OCI-LY7 (cell line): ENCODE measurements at regions of chr9 and their contacts with region 1.

Region 1: GRCh38 chr9:98118640-98119601 is at the start of gene TRIM14:
- DNase-seq: peak; percentile 59
- H3K4me3 ChIP-seq: peak within 1 kb of the TSS; percentile 66
- H3K27ac ChIP-seq: peak within 1 kb of the TSS; percentile 73
- H3K4me1 ChIP-seq: peaks cover 58% of the 10 kb centered on the region
- CTCF ChIP-seq: peak; percentile 34; the same call in 1 of the 2 replicates
- total RNA-seq, gene TRIM14: 18.4 and 21.4 TPM in 2 replicates

Region 2: GRCh38 chr9:98101868-98102273 is 17.1 kb before region 1 on chr9:
- CTCF ChIA-PET with region 1: interaction called, 5 read pairs
- POLR2A ChIA-PET with region 1: interaction called, 39 read pairs
- intact Hi-C with region 1: loop called (anchors 2 kb)
- DNase-seq: peak; percentile 97
- H3K4me3 ChIP-seq: peak overlapping the region; percentile 59
- H3K27ac ChIP-seq: peak overlapping the region; percentile 95
- H3K4me1 ChIP-seq: peaks cover 98% of the 10 kb centered on the region
- CTCF ChIP-seq: no peak

Region 3: DNA sequence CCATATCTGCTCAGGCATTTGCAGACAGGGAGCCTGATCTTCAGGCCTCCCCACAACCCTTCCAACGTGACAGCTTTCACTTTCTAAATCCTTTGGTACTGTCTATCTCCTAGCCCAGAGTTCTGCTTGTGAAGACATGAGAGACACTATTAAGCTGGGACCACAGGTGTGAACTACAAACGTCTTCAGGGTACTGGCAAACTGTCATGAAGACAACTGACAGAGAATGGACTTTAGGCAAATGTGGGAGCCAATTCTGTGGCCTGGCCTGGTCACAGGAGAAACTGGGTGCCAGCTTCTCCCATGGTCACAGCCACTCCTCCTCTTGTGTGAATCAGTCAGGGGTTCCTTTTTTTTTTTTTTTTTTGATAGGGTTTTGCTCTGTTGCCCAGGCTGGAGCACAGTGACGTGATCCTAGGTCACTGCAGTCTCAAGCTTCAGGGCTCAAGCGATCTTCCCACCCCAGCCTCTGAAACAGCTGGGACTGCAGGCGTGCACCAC is 10.3 kb before region 1 on chr9:
- CTCF ChIA-PET with region 1: interaction called, 9 read pairs
- POLR2A ChIA-PET with region 1: interaction called, 39 read pairs
- intact Hi-C with region 1: loop called (anchors 2 kb)
- DNase-seq: peak; percentile 83
- H3K4me3 ChIP-seq: peak overlapping the region; percentile 1
- H3K27ac ChIP-seq: peak overlapping the region; percentile 92
- H3K4me1 ChIP-seq: peaks cover 64% of the 10 kb centered on the region
- CTCF ChIP-seq: no peak

Region 4: DNA sequence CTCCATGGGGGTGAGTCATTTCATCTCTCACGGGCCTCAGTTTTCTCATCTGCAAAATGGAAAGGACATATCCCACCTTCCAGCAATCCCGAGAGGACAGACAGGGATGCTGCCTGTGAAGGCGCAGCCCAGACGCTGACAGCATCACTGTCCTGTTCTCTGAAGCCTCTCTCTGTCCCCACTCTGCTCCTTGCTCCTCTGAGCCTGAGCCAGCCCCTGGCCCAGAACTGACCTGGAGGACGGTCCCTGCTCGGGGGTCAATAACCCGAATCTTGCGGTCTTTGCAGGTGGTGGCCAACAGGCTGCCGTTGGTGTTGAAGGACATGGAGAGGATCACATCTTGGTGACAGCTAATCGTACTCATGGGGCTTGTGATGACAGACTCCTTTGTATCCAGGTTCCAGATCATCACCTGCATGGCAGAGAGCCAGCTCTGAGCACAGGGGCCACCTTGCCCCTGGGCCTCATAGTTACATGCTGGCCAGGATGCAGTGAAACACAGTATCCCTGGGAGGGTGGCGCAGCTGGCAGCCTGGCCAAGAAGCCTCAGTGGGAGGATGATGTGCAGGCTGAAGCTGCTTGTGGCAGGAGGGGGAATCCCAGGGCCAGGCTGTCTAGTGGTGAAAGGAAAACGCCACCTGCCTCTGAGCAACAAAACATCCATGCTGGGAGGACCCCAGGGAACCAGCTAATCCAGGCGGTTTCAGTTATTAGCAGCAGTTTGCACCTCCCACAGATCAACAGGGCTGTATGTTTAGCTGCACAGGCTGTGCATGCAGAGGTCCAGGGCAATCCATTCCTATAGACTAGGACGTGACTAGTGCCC is 14.1 kb after region 1 on chr9:
- CTCF ChIA-PET with region 1: no interaction called
- POLR2A ChIA-PET with region 1: interaction called, 11 read pairs
- intact Hi-C with region 1: no loop called
- DNase-seq: peak; percentile 38
- H3K4me3 ChIP-seq: no peak overlapping the region
- H3K27ac ChIP-seq: no peak overlapping the region
- H3K4me1 ChIP-seq: peaks cover 23% of the 10 kb centered on the region
- CTCF ChIP-seq: peak; percentile 37

Region 5: DNA sequence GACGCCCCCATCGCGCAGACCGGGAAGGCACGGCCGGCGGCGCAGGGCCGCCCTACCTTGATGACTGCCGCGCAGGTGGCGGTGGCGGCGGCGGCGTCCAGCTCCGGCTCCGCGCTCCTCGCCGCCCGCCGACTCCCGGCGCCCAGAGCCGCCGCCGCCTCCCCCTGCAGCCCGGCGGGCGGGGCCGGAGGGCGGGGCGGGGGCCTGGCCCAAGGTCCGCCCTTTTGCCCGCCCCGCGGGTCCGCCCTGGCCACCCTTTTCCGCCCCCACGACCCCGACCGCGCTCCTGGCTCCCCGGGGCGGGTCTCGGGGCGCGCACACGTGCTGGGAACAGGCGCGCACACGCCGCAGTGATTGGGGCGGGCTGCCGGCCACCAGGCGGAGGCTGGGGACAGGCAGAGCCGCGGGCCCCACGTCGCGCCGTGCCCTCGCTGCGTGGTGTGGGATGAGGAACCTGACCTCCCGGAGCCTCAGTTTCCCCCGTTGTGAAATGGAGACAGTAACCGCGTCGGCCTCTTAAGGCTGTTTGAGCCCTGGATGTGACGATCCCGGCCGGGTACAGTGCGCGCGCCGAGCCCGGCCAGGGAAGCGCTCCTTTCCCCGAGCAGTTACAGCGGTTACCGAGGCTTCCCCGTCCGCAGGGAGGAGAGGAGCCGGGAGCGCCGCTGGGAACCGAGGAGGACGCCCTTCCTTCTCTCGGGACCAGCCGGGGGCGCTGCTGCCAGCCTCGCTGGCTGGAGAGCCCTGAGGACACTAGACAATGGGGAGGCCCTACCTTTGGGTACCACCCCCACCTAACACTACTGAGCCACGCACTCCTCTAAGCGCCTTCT is 73.8 kb after region 1 on chr9 and contains the start of gene CORO2A:
- CTCF ChIA-PET with region 1: interaction called, 4 read pairs
- POLR2A ChIA-PET with region 1: interaction called, 5 read pairs
- intact Hi-C with region 1: loop called (anchors 1 kb)
- DNase-seq: peak; percentile 69
- H3K4me3 ChIP-seq: peak within 1 kb of the TSS; percentile 74
- H3K27ac ChIP-seq: no peak within 1 kb of the TSS
- H3K4me1 ChIP-seq: peaks cover 16% of the 10 kb centered on the region
- CTCF ChIP-seq: peak; percentile 70
- total RNA-seq, gene CORO2A: 1.8 and 2.2 TPM in 2 replicates

Region 6: GRCh38 chr9:98263482-98264357 is 144.8 kb after region 1 on chr9:
- CTCF ChIA-PET with region 1: no interaction called
- POLR2A ChIA-PET with region 1: no interaction called
- intact Hi-C with region 1: loop called (anchors 5 kb)
- DNase-seq: peak; percentile 84
- H3K4me3 ChIP-seq: no peak overlapping the region
- H3K27ac ChIP-seq: no peak overlapping the region
- H3K4me1 ChIP-seq: no peaks in the 10 kb centered on the region
- CTCF ChIP-seq: peak; percentile 99